ENCODE measurements at regions of chr5 and their contacts with region 1.

Region 1: GRCh38 chr5:159010661-159011442 is 88.9 kb downstream of the EBF1 start:
- DNase-seq: peak; percentile 84
- ATAC-seq: peak; percentile 91
- H3K4me3 ChIP-seq: peak overlapping the region; percentile 63
- H3K27ac ChIP-seq: peak overlapping the region; percentile 90
- H3K4me1 ChIP-seq: peaks cover 17% of the 10 kb centered on the region
- H3K27me3 ChIP-seq: no peaks in the 10 kb centered on the region
- CTCF ChIP-seq: no peak
- EP300 ChIP-seq: peak in 1 of 2 experiments; percentile 43; a peak in 1 of 4 replicates
- POLR2A ChIP-seq: peak; percentile 50
- RAD21 ChIP-seq: no peak

Region 2: DNA sequence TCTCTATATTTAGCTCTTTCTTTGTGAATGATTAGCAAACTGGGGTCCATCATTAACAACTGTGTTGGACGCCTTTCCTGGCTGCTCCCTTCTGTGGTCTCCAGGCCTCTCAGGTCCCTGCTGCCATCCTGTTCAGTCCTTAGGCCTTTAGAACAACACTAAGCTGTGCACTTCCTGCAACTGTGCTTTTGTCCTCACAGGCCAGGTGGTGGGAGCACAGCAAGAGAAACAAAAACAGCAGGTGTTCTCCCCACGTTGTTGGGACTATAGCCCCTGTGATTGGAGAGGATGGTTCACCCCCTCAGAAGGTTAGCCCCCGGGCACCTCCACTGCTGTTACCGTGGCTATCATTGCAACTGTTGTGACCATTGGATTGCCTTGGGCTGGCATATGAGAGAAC is 1110.2 kb before region 1 on chr5:
- CTCF ChIA-PET with region 1: no interaction called
- POLR2A ChIA-PET with region 1: no interaction called
- RAD21 ChIA-PET with region 1: no interaction called
- SMC1A ChIA-PET with region 1: no interaction called
- in situ Hi-C with region 1: no loop called
- intact Hi-C with region 1: no loop called
- DNase-seq: no peak
- ATAC-seq: peak; percentile 61
- H3K4me3 ChIP-seq: no peak overlapping the region
- H3K27ac ChIP-seq: no peak overlapping the region
- H3K4me1 ChIP-seq: no peaks in the 10 kb centered on the region
- H3K27me3 ChIP-seq: no peaks in the 10 kb centered on the region
- CTCF ChIP-seq: no peak
- EP300 ChIP-seq: no peak
- POLR2A ChIP-seq: no peak
- RAD21 ChIP-seq: no peak

Region 3: GRCh38 chr5:158609333-158610050 is 401.4 kb before region 1 on chr5:
- CTCF ChIA-PET with region 1: no interaction called
- POLR2A ChIA-PET with region 1: no interaction called
- RAD21 ChIA-PET with region 1: no interaction called
- SMC1A ChIA-PET with region 1: no interaction called
- in situ Hi-C with region 1: no loop called
- intact Hi-C with region 1: no loop called
- DNase-seq: no peak
- ATAC-seq: no peak
- H3K4me3 ChIP-seq: no peak overlapping the region
- H3K27ac ChIP-seq: no peak overlapping the region
- H3K4me1 ChIP-seq: no peaks in the 10 kb centered on the region
- H3K27me3 ChIP-seq: no peaks in the 10 kb centered on the region
- CTCF ChIP-seq: no peak
- EP300 ChIP-seq: no peak
- POLR2A ChIP-seq: no peak
- RAD21 ChIP-seq: no peak

Region 4: GRCh38 chr5:158880483-158881001 is 130.3 kb before region 1 on chr5:
- CTCF ChIA-PET with region 1: interaction called, 4 read pairs
- POLR2A ChIA-PET with region 1: interaction called, 5 read pairs
- RAD21 ChIA-PET with region 1: interaction called, 10 read pairs
- SMC1A ChIA-PET with region 1: interaction called, 8 read pairs
- in situ Hi-C with region 1: no loop called
- intact Hi-C with region 1: no loop called
- DNase-seq: no peak
- ATAC-seq: peak; percentile 31
- H3K4me3 ChIP-seq: peak overlapping the region; percentile 24; the same call in 1 of the 2 replicates
- H3K27ac ChIP-seq: peak overlapping the region; percentile 83
- H3K4me1 ChIP-seq: peaks cover 66% of the 10 kb centered on the region
- H3K27me3 ChIP-seq: no peaks in the 10 kb centered on the region
- CTCF ChIP-seq: peak in 2 of 3 experiments; percentile 29 to 53; a peak in 3 of 6 replicates
- EP300 ChIP-seq: peak in 1 of 2 experiments; percentile 2; a peak in 1 of 4 replicates
- POLR2A ChIP-seq: no peak
- RAD21 ChIP-seq: peak; percentile 56

Region 5: DNA sequence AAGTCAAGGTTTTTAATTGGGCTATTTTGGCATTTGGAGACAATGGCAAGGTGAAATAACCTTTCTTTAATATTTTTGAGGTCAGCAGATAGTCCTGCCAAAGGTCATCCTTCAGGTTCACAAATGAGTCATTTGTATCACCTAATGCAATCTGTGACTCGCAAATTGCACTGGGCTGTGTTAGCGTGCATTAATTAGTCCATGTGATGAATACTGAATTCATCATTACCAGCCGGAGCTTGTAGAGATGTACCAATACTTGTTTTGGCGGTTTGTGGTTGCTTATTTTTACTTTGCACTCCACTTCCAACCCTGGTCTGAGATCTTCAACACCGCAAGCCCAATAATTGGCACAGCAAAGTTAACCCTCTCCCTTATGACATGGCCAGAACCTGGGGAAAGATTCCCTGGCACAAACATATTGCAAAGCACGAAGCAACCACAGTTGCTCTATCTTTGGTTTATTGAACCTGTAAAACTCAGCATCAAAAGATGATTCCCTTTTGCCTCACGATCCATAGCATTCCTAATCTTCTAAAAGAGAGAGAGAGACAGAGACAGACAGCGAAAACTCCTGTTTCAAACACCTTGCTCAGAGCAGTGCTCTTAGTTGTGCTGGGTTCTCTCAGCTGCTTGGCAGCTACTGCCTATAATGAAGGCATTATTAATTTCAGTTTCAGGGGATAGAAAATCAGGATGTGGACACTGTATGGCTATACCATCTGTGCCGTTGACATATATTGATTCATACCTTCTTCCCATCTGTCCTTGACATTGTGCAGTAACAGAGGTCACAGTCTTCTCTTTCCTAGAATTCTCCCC is 89.2 kb before region 1 on chr5:
- CTCF ChIA-PET with region 1: no interaction called
- POLR2A ChIA-PET with region 1: interaction called, 15 read pairs
- RAD21 ChIA-PET with region 1: interaction called, 6 read pairs
- SMC1A ChIA-PET with region 1: interaction called, 16 read pairs
- in situ Hi-C with region 1: no loop called
- intact Hi-C with region 1: no loop called
- DNase-seq: peak; percentile 75
- ATAC-seq: peak; percentile 70
- H3K4me3 ChIP-seq: no peak overlapping the region
- H3K27ac ChIP-seq: peak overlapping the region; percentile 45
- H3K4me1 ChIP-seq: peaks cover 3% of the 10 kb centered on the region
- H3K27me3 ChIP-seq: no peaks in the 10 kb centered on the region
- CTCF ChIP-seq: no peak
- EP300 ChIP-seq: peak; percentile 91 to 98
- POLR2A ChIP-seq: no peak
- RAD21 ChIP-seq: no peak

Region 6: DNA sequence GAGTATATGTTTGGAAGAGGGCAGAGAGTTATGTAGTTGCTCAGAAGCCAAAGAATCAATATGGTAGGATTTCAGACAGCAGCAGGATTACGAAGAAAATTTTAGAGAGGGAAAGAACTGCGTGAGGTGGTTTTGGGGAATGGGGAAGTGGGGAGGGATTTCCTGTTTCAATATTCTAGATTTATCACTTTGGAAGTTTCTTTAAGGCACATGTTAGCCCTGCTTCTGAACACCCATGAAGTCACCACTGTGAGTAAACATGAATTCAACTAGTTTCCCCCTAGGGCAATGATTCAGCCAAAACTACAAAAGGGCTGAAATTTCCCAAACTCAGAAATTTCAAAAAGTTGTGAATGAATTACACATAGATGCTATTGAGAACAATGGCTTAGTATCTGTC is 43.3 kb before region 1 on chr5:
- CTCF ChIA-PET with region 1: interaction called, 6 read pairs
- POLR2A ChIA-PET with region 1: interaction called, 38 read pairs
- RAD21 ChIA-PET with region 1: interaction called, 6 read pairs
- SMC1A ChIA-PET with region 1: interaction called, 81 read pairs
- in situ Hi-C with region 1: no loop called
- intact Hi-C with region 1: no loop called
- DNase-seq: no peak
- ATAC-seq: peak; percentile 74
- H3K4me3 ChIP-seq: no peak overlapping the region
- H3K27ac ChIP-seq: peak overlapping the region; percentile 14; the same call in 1 of the 2 replicates
- H3K4me1 ChIP-seq: peaks cover 6% of the 10 kb centered on the region
- H3K27me3 ChIP-seq: no peaks in the 10 kb centered on the region
- CTCF ChIP-seq: no peak
- EP300 ChIP-seq: peak in 1 of 2 experiments; percentile 23; a peak in 1 of 4 replicates
- POLR2A ChIP-seq: no peak
- RAD21 ChIP-seq: no peak

Region 7: GRCh38 chr5:159027504-159027903 is 16.7 kb after region 1 on chr5:
- CTCF ChIA-PET with region 1: interaction called, 8 read pairs
- POLR2A ChIA-PET with region 1: interaction called, 5 read pairs
- RAD21 ChIA-PET with region 1: interaction called, 3 read pairs
- SMC1A ChIA-PET with region 1: interaction called, 86 read pairs
- in situ Hi-C with region 1: no loop called
- intact Hi-C with region 1: no loop called
- DNase-seq: no peak
- ATAC-seq: no peak
- H3K4me3 ChIP-seq: no peak overlapping the region
- H3K27ac ChIP-seq: no peak overlapping the region
- H3K4me1 ChIP-seq: peaks cover 10% of the 10 kb centered on the region
- H3K27me3 ChIP-seq: no peaks in the 10 kb centered on the region
- CTCF ChIP-seq: no peak
- EP300 ChIP-seq: no peak
- POLR2A ChIP-seq: no peak
- RAD21 ChIP-seq: no peak

Region 8: GRCh38 chr5:159040181-159040580 is 29.3 kb after region 1 on chr5:
- CTCF ChIA-PET with region 1: interaction called, 5 read pairs
- POLR2A ChIA-PET with region 1: interaction called, 8 read pairs
- RAD21 ChIA-PET with region 1: interaction called, 8 read pairs
- SMC1A ChIA-PET with region 1: interaction called, 86 read pairs
- in situ Hi-C with region 1: no loop called
- intact Hi-C with region 1: no loop called
- DNase-seq: peak; percentile 56
- ATAC-seq: peak; percentile 85
- H3K4me3 ChIP-seq: no peak overlapping the region
- H3K27ac ChIP-seq: peak overlapping the region; percentile 36; the same call in 1 of the 2 replicates
- H3K4me1 ChIP-seq: peaks cover 29% of the 10 kb centered on the region
- H3K27me3 ChIP-seq: no peaks in the 10 kb centered on the region
- CTCF ChIP-seq: no peak
- EP300 ChIP-seq: no peak
- POLR2A ChIP-seq: no peak
- RAD21 ChIP-seq: no peak

Region 9: DNA sequence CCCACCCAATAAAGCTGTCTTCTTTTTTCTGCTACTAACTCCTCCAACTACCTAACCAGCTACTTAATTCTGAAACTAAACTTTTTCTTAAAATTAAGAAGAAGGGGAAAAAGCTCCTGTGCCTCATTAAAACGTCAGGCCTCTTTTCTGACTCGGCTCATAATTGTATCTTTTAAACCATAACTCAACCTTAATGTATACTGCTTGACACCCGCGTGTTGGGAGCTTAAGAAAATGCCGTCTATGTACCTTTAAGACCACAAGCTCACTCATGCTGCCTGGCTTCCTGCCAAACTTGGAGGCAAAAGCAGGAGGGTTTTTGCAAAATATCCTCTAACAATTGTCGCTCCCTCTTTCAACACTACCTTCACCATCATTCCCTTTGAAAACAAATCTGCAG is 83.9 kb after region 1 on chr5:
- CTCF ChIA-PET with region 1: interaction called, 3 read pairs
- POLR2A ChIA-PET with region 1: no interaction called
- RAD21 ChIA-PET with region 1: interaction called, 16 read pairs
- SMC1A ChIA-PET with region 1: interaction called, 11 read pairs
- in situ Hi-C with region 1: no loop called
- intact Hi-C with region 1: loop called (anchors 2 kb)
- DNase-seq: no peak
- ATAC-seq: peak; percentile 35
- H3K4me3 ChIP-seq: peak overlapping the region; percentile 88
- H3K27ac ChIP-seq: peak overlapping the region; percentile 68
- H3K4me1 ChIP-seq: peaks cover 5% of the 10 kb centered on the region; the same call in 1 of the 2 replicates
- H3K27me3 ChIP-seq: no peaks in the 10 kb centered on the region
- CTCF ChIP-seq: no peak
- EP300 ChIP-seq: no peak
- POLR2A ChIP-seq: no peak
- RAD21 ChIP-seq: no peak

Region 10: DNA sequence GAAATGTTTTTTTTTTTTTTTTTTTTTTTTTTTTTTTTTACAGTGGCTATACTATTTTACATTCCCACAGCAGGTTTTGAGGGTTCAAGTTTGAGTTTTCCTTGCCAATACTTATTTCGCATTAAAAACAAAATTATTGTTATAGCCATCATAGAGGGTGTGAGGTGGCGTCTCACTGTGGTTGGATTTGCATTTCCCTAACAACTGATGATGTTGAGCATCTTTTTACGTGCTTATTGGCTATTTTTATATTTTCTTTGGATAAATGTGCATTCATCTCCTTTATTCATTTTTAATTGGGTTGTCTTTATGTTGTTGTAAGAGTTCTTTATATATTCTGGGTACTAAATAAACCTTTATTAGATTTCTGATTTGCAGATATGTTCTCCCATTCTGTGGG is 233.3 kb after region 1 on chr5:
- CTCF ChIA-PET with region 1: no interaction called
- POLR2A ChIA-PET with region 1: no interaction called
- RAD21 ChIA-PET with region 1: no interaction called
- SMC1A ChIA-PET with region 1: no interaction called
- in situ Hi-C with region 1: no loop called
- intact Hi-C with region 1: no loop called
- DNase-seq: no peak
- ATAC-seq: no peak
- H3K4me3 ChIP-seq: no peak overlapping the region
- H3K27ac ChIP-seq: no peak overlapping the region
- H3K4me1 ChIP-seq: no peaks in the 10 kb centered on the region
- H3K27me3 ChIP-seq: no peaks in the 10 kb centered on the region
- CTCF ChIP-seq: no peak
- EP300 ChIP-seq: no peak
- POLR2A ChIP-seq: no peak
- RAD21 ChIP-seq: no peak

Region 11: DNA sequence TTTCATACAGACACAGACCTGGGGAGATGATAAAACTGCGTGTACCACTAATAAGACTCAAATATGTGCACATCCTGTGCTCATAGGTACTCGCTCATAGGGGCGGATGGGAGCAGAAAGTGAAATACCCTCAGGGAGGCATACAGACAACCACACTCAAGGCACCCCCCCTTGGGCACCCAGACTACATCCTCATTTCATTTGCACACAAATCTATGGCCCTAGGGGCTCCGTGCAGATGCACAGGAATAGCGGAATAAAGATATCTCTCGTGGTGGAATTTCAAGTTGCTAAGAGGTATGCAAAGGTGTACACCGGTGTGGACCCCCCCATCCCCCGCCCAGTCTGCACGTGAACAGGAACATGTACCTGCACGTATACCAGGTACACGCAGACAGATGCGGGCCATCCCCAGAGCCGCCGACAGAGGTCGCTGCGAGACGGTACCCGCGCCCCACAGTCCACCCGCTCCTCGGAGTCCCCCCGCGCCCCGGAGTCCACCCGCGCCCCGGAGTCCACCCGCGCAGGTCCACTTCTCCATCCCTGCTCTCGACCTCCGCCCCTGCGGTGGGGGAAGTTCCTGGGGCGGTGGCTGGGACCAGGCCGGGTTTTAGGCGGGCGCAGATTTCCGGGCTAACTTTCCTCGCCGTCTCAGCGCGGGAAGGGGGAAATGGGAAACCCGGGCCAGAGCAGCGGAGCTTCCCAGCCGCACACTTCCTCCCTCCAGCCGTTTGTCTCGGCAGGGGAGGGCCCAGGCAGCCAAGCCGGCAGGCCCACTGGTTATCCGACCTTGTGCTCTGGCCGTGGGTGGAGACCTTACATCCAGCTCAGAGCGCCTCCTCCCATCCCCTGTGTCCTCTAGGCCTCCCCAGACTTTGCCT is 320.5 kb after region 1 on chr5:
- CTCF ChIA-PET with region 1: no interaction called
- POLR2A ChIA-PET with region 1: no interaction called
- RAD21 ChIA-PET with region 1: no interaction called
- SMC1A ChIA-PET with region 1: no interaction called
- in situ Hi-C with region 1: no loop called
- intact Hi-C with region 1: no loop called
- DNase-seq: no peak
- ATAC-seq: peak; percentile 83
- H3K4me3 ChIP-seq: peak overlapping the region; percentile 54
- H3K27ac ChIP-seq: no peak overlapping the region
- H3K4me1 ChIP-seq: peaks cover 10% of the 10 kb centered on the region
- H3K27me3 ChIP-seq: 0 out of 4 replicates have a peak, but pooled peaks cover 0 to 3% of the 10 kb centered on the region in 2 experiments
- CTCF ChIP-seq: peak; percentile 63 to 93 (median 76)
- EP300 ChIP-seq: no peak
- POLR2A ChIP-seq: no peak
- RAD21 ChIP-seq: peak; percentile 56